IMR-90 (cell line): ENCODE measurements at regions of chr11 and their contacts with region 1.

Region 1: GRCh38 chr11:78798660-78799059 is 224.0 kb upstream of the NARS2 start:
- DNase-seq: peak; percentile 81
- ATAC-seq: peak; percentile 36
- H3K4me3 ChIP-seq: no peak overlapping the region
- H3K27ac ChIP-seq: peak overlapping the region; percentile 87
- H3K4me1 ChIP-seq: peaks cover 48% of the 10 kb centered on the region
- H3K27me3 ChIP-seq: no peaks in the 10 kb centered on the region
- CTCF ChIP-seq: peak; percentile 75
- POLR2A ChIP-seq: no peak
- RAD21 ChIP-seq: peak; percentile 69

Region 2: DNA sequence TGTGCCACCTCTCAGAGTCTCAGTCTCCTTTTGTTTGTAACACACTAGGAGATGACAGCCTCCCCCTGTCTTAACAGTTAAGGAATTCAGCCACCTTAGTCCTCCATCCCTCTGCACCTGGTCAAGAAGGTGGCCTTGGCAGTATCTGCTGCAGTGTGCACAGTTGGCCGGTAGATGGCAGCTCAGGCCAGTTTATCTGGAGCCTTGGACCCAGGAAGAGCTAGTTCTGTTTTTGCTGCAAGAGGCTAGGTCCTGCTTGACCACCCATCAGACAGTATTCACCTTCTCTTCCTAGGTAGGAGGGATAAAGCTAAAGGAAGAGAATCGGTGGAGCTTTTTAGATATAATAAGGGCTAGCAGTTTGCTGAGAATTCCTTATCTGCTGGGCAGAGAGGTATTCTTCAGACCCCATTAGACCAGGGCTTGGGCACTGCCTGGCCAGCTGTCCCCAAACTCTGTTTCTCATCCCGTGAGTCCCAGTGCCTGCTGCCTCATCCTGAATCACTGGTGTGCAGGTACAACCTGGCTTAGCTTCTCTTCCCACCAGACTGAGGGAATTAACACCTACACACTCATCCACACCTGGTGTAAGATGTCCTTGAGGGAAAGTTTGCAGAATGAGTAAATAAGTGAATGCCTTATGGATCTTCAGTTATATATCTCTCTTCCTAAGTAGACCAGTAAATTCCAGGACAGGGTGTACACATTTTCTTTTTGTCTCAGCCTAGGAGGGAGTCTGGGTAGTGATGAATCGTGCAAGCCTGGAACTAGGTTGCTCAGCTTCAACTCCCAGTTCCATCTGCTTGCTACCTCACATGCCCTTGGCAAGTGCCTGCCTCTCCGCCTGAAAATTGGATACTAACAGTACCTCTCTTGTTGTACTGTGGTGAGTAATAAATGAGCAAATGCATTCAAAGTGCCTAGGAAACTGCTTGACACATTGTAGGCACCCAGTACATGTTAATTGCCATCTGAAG is 153.1 kb before region 1 on chr11:
- CTCF ChIA-PET with region 1: interaction called, 9 read pairs
- POLR2A ChIA-PET with region 1: no interaction called
- dilution Hi-C with region 1: no loop called
- in situ Hi-C with region 1: no loop called
- intact Hi-C with region 1: loop called (anchors 5 kb)
- DNase-seq: peak; percentile 72
- ATAC-seq: peak; percentile 95
- H3K4me3 ChIP-seq: no peak overlapping the region
- H3K27ac ChIP-seq: no peak overlapping the region
- H3K4me1 ChIP-seq: peaks cover 7% of the 10 kb centered on the region; the same call in 1 of the 2 replicates
- H3K27me3 ChIP-seq: no peaks in the 10 kb centered on the region
- CTCF ChIP-seq: peak; percentile 90
- POLR2A ChIP-seq: peak; percentile 2; the same call in 1 of the 2 replicates
- RAD21 ChIP-seq: peak; percentile 95

Region 3: DNA sequence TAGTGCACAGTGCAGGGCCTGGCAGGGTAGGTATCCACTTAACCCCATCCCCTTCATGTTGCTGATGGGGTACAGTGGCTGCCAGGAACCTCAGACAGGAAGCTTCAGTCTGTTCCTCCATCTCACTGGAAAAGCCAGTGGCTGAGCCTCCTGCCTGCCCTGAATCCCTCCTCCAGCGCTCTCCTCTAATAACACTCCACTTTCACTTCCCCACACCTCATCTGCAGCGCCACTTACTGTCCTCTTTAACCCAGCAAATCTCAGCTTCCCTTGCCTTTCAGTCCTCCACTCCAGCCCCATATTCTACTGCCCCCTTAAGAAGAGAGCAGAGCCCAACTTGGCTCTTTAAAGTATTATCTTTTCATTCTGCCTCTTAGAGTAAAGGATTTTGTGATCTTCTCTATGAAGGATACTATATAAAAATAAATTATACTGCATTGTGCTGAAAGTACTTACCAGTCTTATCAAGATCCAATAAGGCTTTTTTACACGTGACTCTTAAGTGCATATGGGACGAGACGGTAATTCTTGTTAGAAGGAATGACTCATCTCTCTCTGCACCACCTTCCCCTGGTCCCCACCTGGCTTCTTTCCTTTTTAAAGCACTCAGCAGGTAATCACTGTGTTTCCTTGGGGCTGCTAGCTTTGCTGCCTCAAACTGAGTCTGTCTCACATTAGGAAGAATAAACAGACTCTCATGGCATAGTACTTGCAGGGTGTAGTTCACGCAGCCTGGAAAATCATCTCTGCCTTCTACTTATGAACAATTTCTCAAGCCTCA is 14.0 kb after region 1 on chr11:
- CTCF ChIA-PET with region 1: interaction called, 29 read pairs
- POLR2A ChIA-PET with region 1: interaction called, 13 read pairs
- dilution Hi-C with region 1: no loop called
- in situ Hi-C with region 1: no loop called
- intact Hi-C with region 1: no loop called
- DNase-seq: peak; percentile 57
- ATAC-seq: peak; percentile 39
- H3K4me3 ChIP-seq: no peak overlapping the region
- H3K27ac ChIP-seq: peak overlapping the region; percentile 99; the same call in 1 of the 2 replicates
- H3K4me1 ChIP-seq: peaks cover 32% of the 10 kb centered on the region
- H3K27me3 ChIP-seq: no peaks in the 10 kb centered on the region
- CTCF ChIP-seq: peak; percentile 39
- POLR2A ChIP-seq: no peak
- RAD21 ChIP-seq: peak; percentile 25; the same call in 1 of the 2 replicates

Region 4: GRCh38 chr11:78840200-78840599 is 41.5 kb after region 1 on chr11:
- CTCF ChIA-PET with region 1: no interaction called
- POLR2A ChIA-PET with region 1: no interaction called
- dilution Hi-C with region 1: no loop called
- in situ Hi-C with region 1: no loop called
- intact Hi-C with region 1: loop called (anchors 2 kb)
- DNase-seq: peak; percentile 91
- ATAC-seq: peak; percentile 87
- H3K4me3 ChIP-seq: no peak overlapping the region
- H3K27ac ChIP-seq: peak overlapping the region; percentile 100; the same call in 1 of the 2 replicates
- H3K4me1 ChIP-seq: peaks cover 13% of the 10 kb centered on the region
- H3K27me3 ChIP-seq: no peaks in the 10 kb centered on the region
- CTCF ChIP-seq: no peak
- POLR2A ChIP-seq: no peak
- RAD21 ChIP-seq: no peak

Region 5: GRCh38 chr11:79052544-79052943 is 253.9 kb after region 1 on chr11:
- CTCF ChIA-PET with region 1: interaction called, 5 read pairs
- POLR2A ChIA-PET with region 1: no interaction called
- dilution Hi-C with region 1: no loop called
- in situ Hi-C with region 1: loop called (anchors 10 kb)
- intact Hi-C with region 1: loop called (anchors 10 kb)
- DNase-seq: no peak
- ATAC-seq: peak; percentile 8; the same call in 1 of the 2 replicates
- H3K4me3 ChIP-seq: no peak overlapping the region
- H3K27ac ChIP-seq: peak overlapping the region; percentile 55; the same call in 1 of the 2 replicates
- H3K4me1 ChIP-seq: peaks cover 24% of the 10 kb centered on the region
- H3K27me3 ChIP-seq: no peaks in the 10 kb centered on the region
- CTCF ChIP-seq: peak; percentile 17; the same call in 1 of the 2 replicates
- POLR2A ChIP-seq: no peak
- RAD21 ChIP-seq: 0 out of 2 replicates have a peak, but pooled peaks have one; percentile 14

Region 6: DNA sequence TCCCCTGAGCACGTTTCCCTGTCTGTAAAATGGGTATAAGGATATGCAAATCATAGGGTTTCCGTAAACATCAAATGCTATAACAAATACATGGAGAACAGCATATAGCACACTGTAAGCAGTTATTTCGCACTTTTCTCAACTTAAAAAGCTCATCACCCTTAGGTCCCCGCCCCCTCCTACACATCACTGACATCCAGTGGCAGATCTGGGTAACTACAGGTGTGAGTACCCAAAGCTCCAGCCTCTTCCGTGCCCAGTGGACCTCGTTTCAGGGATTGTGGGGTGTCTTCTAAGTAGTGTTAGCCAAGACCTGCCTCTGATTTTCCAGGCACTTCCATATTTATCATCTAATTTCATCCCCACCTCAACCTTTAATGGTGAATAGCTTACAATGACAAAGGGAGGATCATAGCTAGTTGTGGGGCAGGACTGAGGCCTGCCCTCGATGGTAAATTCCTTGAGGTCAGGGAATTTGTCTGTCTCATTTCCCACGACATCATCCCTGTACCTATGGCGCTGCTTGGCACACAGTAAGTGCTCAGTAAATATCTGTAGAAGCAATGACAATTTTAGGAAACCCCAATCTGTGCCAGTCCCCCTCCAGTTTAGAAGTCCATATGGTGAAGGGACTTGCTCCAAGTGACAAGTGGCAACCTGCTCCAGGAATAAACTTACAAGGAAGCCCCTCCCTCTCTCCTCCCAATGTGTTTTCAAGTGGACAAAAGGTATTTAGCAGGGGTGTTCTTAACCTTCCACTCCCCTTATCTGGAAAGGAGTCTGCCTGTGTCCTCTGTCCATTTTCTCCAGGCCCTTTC is 301.6 kb after region 1 on chr11:
- CTCF ChIA-PET with region 1: no interaction called
- POLR2A ChIA-PET with region 1: no interaction called
- dilution Hi-C with region 1: no loop called
- in situ Hi-C with region 1: no loop called
- intact Hi-C with region 1: loop called (anchors 5 kb)
- DNase-seq: peak; percentile 55
- ATAC-seq: peak; percentile 93
- H3K4me3 ChIP-seq: no peak overlapping the region
- H3K27ac ChIP-seq: no peak overlapping the region
- H3K4me1 ChIP-seq: peaks cover 5% of the 10 kb centered on the region
- H3K27me3 ChIP-seq: no peaks in the 10 kb centered on the region
- CTCF ChIP-seq: peak; percentile 77
- POLR2A ChIP-seq: no peak
- RAD21 ChIP-seq: peak; percentile 84

Region 7: GRCh38 chr11:79244241-79244772 is 445.6 kb after region 1 on chr11:
- CTCF ChIA-PET with region 1: no interaction called
- POLR2A ChIA-PET with region 1: no interaction called
- dilution Hi-C with region 1: no loop called
- in situ Hi-C with region 1: loop called (anchors 10 kb)
- intact Hi-C with region 1: loop called (anchors 10 kb)
- DNase-seq: peak; percentile 97
- ATAC-seq: peak; percentile 90
- H3K4me3 ChIP-seq: no peak overlapping the region
- H3K27ac ChIP-seq: peak overlapping the region; percentile 91
- H3K4me1 ChIP-seq: peaks cover 22% of the 10 kb centered on the region
- H3K27me3 ChIP-seq: no peaks in the 10 kb centered on the region
- CTCF ChIP-seq: no peak
- POLR2A ChIP-seq: no peak
- RAD21 ChIP-seq: no peak